ENCODE measurements at regions of chr5 and their contacts with region 1.

Region 1: GRCh38 chr5:135944967-135945560 is 9.7 kb downstream of the LECT2 start:
- DNase-seq: peak; percentile 26
- ATAC-seq: peak; percentile 75 to 80
- H3K4me3 ChIP-seq: no peak overlapping the region
- H3K27ac ChIP-seq: no peak overlapping the region
- H3K4me1 ChIP-seq: no peaks in the 10 kb centered on the region
- H3K27me3 ChIP-seq: no peaks in the 10 kb centered on the region
- CTCF ChIP-seq: peak; percentile 67 to 79 (median 71)
- POLR2A ChIP-seq: no peak

Region 2: GRCh38 chr5:136062366-136063274 is 117.6 kb after region 1 on chr5:
- in situ Hi-C with region 1: no loop called
- intact Hi-C with region 1: loop called (anchors 1 kb)
- DNase-seq: no peak
- ATAC-seq: no peak
- H3K4me3 ChIP-seq: no peak overlapping the region
- H3K27ac ChIP-seq: no peak overlapping the region
- H3K4me1 ChIP-seq: peaks cover 4 to 18% of the 10 kb centered on the region in 2 donors
- H3K27me3 ChIP-seq: no peaks in the 10 kb centered on the region
- CTCF ChIP-seq: peak; percentile 18 to 57 (median 49)
- POLR2A ChIP-seq: no peak

Region 3: GRCh38 chr5:136073714-136074529 is 128.9 kb after region 1 on chr5:
- in situ Hi-C with region 1: loop called in 1 of 4 experiments (anchors 10 kb)
- intact Hi-C with region 1: no loop called
- DNase-seq: no peak
- ATAC-seq: no peak
- H3K4me3 ChIP-seq: no peak overlapping the region
- H3K27ac ChIP-seq: no peak overlapping the region
- H3K4me1 ChIP-seq: peaks cover 0 to 7% of the 10 kb centered on the region in 2 donors
- H3K27me3 ChIP-seq: no peaks in the 10 kb centered on the region
- CTCF ChIP-seq: no peak
- POLR2A ChIP-seq: no peak

Region 4: DNA sequence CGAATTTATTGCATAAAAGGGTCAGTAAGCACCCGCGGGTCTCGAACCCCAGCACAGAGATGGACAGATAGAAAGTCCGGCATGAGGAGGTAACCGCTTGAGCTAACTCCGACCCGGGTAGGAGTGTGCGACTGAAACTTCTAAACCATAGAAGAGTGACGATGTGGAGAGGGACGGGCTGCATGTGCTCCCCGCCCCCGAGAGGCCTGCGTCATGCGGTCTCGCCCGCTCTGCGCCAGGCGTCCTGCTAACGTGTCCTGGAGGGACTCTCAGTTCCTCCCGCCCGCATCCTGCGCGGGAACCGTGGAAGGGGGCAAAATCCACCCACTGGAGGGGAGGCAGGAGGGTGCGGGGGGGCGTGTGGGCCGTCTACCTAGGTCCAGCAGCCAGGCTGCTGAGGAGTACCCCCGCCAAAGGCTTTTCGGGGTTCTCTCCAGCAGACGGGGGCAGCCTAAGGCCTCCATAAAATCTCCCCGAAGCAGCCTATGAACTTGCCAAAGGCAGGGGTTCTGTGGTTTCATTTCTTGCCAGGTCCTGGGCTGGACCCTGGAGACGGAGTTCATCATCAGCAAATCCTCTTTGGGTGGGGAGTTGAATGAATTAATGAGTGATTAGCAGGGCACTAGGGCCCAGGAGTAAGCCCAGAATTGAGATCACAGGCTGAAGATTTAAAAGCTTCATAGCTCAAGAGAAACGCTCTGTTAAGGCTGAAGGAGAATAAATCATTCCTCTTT is 135.6 kb after region 1 on chr5:
- in situ Hi-C with region 1: loop called (anchors 5 to 10 kb)
- intact Hi-C with region 1: loop called (anchors 2 kb)
- DNase-seq: peak; percentile 56 to 61
- ATAC-seq: peak; percentile 59 to 69
- H3K4me3 ChIP-seq: peak overlapping the region; percentile 9 to 46 (median 35)
- H3K27ac ChIP-seq: peak overlapping the region; percentile 52 to 65 (median 60)
- H3K4me1 ChIP-seq: peaks cover 0 to 5% of the 10 kb centered on the region in 2 donors
- H3K27me3 ChIP-seq: no peaks in the 10 kb centered on the region
- CTCF ChIP-seq: no peak
- POLR2A ChIP-seq: peak; percentile 28 to 56

Region 5: DNA sequence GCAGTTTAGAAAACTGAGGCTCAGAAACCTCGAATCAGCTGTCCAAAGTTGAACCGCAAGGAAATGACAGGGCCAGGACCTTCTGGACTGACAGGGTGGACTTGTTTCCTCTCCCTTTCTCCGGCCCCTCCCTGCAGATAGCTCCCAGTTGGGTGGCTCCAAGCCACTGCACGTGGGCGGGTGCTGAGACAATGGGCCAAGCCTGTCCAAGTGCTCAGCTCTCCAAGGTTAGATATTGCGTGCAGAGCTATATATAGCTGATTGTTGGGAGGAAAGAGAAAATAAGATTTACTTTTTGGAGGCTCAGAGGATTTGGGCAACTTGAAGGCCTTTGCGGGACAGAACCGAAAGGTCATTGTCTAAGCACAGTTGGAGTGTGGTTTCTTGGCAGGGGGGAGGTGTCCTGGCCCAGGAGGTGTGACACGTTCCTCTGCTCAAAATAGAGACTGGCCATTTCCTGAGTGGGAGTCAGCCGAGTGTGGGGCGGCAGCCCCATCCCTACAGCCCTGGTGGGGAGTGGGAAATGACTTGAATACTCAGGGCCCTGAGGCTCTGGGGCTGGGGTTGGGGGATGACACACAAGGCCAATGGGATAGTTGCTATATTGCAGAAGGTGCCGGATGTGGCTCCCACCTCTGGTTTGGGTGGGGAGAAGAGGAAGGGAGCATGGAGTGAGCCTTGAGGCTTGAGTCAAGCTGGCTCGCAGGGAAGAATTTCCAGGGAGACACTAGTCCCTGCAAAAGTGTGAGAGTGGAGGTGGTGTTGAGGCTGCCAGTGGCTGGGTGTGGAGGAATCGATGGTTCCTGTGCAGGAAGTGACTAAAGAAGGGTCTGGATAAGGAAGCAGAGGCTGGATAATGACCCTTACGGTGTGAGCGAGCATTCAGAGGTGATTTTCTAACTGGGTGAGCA is 143.2 kb after region 1 on chr5:
- in situ Hi-C with region 1: loop called in 3 of 4 experiments (anchors 5 to 10 kb)
- intact Hi-C with region 1: loop called (anchors 2 kb)
- DNase-seq: peak; percentile 31 to 75
- ATAC-seq: peak; percentile 90 to 96
- H3K4me3 ChIP-seq: peak overlapping the region in 2 of 4 donors; percentile 4 to 8
- H3K27ac ChIP-seq: peak overlapping the region; percentile 62 to 82 (median 76)
- H3K4me1 ChIP-seq: peaks cover 10 to 11% of the 10 kb centered on the region in 2 donors
- H3K27me3 ChIP-seq: no peaks in the 10 kb centered on the region
- CTCF ChIP-seq: no peak
- POLR2A ChIP-seq: no peak

Region 6: DNA sequence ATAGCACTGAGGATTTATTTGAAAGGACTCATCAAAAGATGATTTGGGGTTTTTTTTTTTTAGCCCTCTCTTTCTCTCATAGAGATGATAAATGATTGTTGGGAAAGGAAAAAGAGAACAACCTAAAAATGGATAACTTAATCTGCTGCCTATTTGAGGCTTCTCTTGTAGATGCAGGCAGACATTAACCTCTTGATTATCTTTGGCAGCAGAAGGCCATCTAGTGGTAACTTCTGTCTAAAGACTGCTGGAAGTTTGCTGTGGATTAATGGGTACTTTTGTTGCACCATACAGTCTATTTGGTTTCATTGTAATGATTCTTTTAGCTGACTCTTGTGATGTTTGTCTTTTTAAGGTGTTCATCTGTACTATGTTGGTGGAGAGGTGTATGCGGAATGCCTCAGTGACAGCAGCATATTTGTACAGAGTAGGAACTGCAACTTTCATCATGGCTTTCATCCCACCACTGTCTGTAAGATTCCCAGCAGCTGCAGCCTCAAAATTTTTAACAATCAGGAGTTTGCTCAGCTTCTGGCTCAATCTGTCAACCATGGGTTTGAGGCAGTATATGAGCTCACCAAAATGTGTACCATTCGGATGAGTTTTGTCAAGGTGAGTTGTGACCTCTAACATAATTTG is 229.1 kb after region 1 on chr5:
- in situ Hi-C with region 1: no loop called
- intact Hi-C with region 1: loop called (anchors 1 kb)
- DNase-seq: no peak
- ATAC-seq: peak in 1 of 2 donors; percentile 36
- H3K4me3 ChIP-seq: no peak overlapping the region
- H3K27ac ChIP-seq: no peak overlapping the region
- H3K4me1 ChIP-seq: no peaks in the 10 kb centered on the region
- H3K27me3 ChIP-seq: no peaks in the 10 kb centered on the region
- CTCF ChIP-seq: peak in 4 of 5 experiments; percentile 34 to 54 (median 44)
- POLR2A ChIP-seq: no peak

Region 7: DNA sequence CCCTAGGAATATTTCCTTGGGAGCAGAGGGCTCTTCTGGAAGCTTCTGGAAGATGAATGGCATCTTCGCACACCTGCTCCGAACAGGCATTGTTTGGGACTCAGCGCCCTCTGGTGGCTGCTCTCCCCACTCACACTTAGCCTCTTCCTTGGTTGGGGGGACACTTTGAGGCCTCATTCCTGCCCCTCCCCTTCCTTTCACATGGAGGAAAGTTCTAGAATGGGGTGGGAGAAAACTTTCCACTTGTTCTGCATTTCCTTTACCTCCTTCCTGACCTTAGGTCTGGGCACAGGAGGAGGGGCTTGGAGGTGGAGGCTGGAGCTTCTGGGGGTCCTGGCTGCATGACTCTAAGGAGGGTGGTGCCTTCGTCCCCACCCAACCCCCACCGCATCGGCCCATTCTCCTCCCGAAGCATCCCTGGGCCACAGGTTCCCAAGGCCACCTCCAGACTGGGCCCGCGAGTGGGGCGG is 267.2 kb after region 1 on chr5:
- in situ Hi-C with region 1: loop called in 1 of 4 experiments (anchors 10 kb)
- intact Hi-C with region 1: loop called (anchors 1 kb)
- DNase-seq: peak in 1 of 2 donors; percentile 20
- ATAC-seq: peak; percentile 42 to 56
- H3K4me3 ChIP-seq: no peak overlapping the region
- H3K27ac ChIP-seq: no peak overlapping the region
- H3K4me1 ChIP-seq: no peaks in the 10 kb centered on the region
- H3K27me3 ChIP-seq: peaks cover 0 to 2% (median 0%) of the 10 kb centered on the region in 3 donors
- CTCF ChIP-seq: peak; percentile 57 to 89 (median 80)
- POLR2A ChIP-seq: no peak